Posterior cingulate gyrus (tissue), 11 donors: ENCODE measurements at regions of chr9 and their contacts with region 1.

Region 1: GRCh38 chr9:26955921-26956859 is at the start of gene IFT74:
- DNase-seq: peak; percentile 92 to 100 (median 98)

Region 2: DNA sequence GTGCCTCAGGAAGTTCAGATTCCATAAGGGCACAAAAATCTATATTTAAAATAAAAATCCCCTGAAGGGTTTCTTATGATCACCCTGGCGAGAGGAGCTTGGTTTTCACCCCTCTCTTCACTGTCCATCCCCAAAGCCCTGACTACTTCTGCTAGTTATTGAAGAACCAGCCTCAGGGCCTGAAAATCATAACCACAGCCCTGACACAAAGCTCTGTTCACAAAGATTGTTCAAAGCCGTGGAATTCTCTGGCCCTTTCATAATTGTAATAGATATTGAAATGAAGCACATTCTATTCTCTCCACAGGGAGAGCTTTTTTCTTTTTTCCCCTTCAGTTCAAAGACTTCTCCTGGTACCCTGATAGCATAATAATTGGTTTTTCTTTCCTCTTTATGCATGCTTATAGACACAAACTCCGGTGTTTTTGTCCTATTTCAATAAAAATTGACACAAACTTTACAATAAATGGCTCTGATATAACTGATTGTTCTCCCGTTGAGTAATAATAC is 407.4 kb before region 1 on chr9:
- intact Hi-C with region 1: no loop called
- DNase-seq: no peak

Region 3: GRCh38 chr9:26574256-26574655 is 381.9 kb before region 1 on chr9:
- intact Hi-C with region 1: no loop called
- DNase-seq: no peak

Region 4: GRCh38 chr9:27573634-27574590 is 617.7 kb after region 1 on chr9:
- intact Hi-C with region 1: loop called (anchors 5 kb)
- DNase-seq: peak; percentile 81 to 98 (median 93)